CD4-positive, alpha-beta T cell (primary cell): ENCODE measurements at regions of chr3 and their contacts with region 1.

Region 1: DNA sequence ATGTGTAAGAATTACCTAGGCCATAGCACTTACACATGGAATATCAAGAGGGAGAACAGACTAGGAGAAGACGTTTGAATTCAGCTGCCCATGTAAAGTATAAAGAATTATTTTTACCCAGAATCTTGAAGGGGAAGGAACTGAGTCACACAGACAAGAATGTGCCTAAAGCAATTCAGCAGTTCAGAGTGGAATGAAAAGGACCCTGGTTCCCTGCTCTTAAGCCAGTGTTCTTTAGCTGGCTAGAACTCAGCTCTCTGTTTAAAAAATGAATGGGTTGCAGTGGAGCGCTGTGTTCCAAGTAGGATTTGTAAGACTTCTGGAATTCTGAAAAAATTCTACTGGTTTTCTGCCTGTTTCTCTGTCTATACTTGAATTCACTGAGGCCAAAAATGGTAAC is 440.2 kb downstream of the LPP start:
- DNase-seq: no peak
- ATAC-seq: no peak
- H3K4me3 ChIP-seq: no peak overlapping the region
- H3K4me3 Mint-ChIP-seq: no peak overlapping the region
- H3K27ac ChIP-seq: no peak overlapping the region
- H3K27ac Mint-ChIP-seq: no peak overlapping the region
- H3K4me1 ChIP-seq: no peaks in the 10 kb centered on the region
- H3K4me1 Mint-ChIP-seq: no peaks in the 10 kb centered on the region
- H3K27me3 ChIP-seq: no peaks in the 10 kb centered on the region
- H3K27me3 Mint-ChIP-seq: no peaks in the 10 kb centered on the region
- CTCF ChIP-seq: no peak

Region 2: GRCh38 chr3:188082031-188082430 is 512.1 kb before region 1 on chr3:
- CTCF ChIA-PET with region 1: no interaction called
- POLR2A ChIA-PET with region 1: no interaction called
- intact Hi-C with region 1: loop called in 1 of 2 experiments (anchors 10 kb)
- DNase-seq: no peak
- ATAC-seq: no peak
- H3K4me3 ChIP-seq: no peak overlapping the region
- H3K4me3 Mint-ChIP-seq: no peak overlapping the region
- H3K27ac ChIP-seq: no peak overlapping the region
- H3K27ac Mint-ChIP-seq: no peak overlapping the region
- H3K4me1 ChIP-seq: no peaks in the 10 kb centered on the region
- H3K4me1 Mint-ChIP-seq: no peaks in the 10 kb centered on the region
- H3K27me3 ChIP-seq: no peaks in the 10 kb centered on the region
- H3K27me3 Mint-ChIP-seq: no peaks in the 10 kb centered on the region
- CTCF ChIP-seq: no peak

Region 3: GRCh38 chr3:188664795-188665194 is 70.7 kb after region 1 on chr3:
- CTCF ChIA-PET with region 1: no interaction called
- POLR2A ChIA-PET with region 1: no interaction called
- intact Hi-C with region 1: no loop called
- DNase-seq: peak in 5 of 14 experiments; percentile 0 to 45 (median 16)
- ATAC-seq: no peak
- H3K4me3 ChIP-seq: no peak overlapping the region
- H3K4me3 Mint-ChIP-seq: no peak overlapping the region
- H3K27ac ChIP-seq: no peak overlapping the region
- H3K27ac Mint-ChIP-seq: no peak overlapping the region
- H3K4me1 ChIP-seq: no peaks in the 10 kb centered on the region
- H3K4me1 Mint-ChIP-seq: no peaks in the 10 kb centered on the region
- H3K27me3 ChIP-seq: no peaks in the 10 kb centered on the region
- H3K27me3 Mint-ChIP-seq: no peaks in the 10 kb centered on the region
- CTCF ChIP-seq: no peak